CD4-positive, alpha-beta memory T cell (primary cell): ENCODE measurements at regions of chr3 and their contacts with region 1.

Region 1: DNA sequence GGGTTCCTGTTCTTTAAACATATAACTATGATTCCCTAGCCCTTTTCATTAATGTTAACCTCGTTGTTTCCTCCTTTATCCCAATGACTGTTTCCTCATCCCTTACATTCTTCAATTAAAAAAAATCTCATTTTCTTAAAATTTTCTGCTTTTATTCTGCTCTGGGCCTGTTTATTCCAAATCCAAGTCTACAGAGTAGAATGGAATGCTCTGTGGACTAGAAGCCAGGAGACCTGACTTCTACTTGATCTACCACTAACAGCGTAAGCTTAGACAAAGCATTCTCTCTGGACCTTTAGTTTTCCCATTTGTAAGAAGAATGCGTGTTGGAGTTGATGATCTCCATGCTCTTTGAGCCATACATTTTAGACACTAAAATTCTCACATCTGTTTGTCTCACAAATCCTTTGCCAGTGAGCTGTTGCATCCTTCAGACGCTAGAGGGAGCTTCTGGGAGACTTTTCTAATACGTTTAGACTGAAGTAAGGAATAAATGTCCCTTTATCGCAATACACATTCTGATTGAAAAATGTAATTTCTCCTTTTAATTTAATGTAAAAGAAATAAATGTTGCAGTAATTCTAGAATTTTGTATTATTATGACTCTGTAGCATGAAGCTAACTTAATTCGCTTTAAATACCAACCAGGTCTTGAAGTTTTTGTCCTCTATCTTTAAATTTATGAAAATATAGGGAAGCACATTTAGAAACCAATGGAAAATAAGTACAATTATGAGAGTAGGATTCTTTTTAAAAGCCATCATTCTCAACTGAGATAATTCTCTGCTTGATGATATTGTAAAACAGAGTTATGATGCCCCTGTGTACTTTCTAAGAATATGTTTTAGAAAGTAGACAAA is 21.7 kb upstream of the GMNC start:
- DNase-seq: peak in 3 of 5 donors; percentile 2 to 9 (median 6)
- H3K4me3 ChIP-seq: no peak overlapping the region
- H3K4me3 Mint-ChIP-seq: no peak overlapping the region
- H3K27ac ChIP-seq: no peak overlapping the region
- H3K27ac Mint-ChIP-seq: no peak overlapping the region
- H3K4me1 ChIP-seq: no peaks in the 10 kb centered on the region
- H3K4me1 Mint-ChIP-seq: no peaks in the 10 kb centered on the region
- H3K27me3 ChIP-seq: no peaks in the 10 kb centered on the region
- H3K27me3 Mint-ChIP-seq: no peaks in the 10 kb centered on the region

Region 2: DNA sequence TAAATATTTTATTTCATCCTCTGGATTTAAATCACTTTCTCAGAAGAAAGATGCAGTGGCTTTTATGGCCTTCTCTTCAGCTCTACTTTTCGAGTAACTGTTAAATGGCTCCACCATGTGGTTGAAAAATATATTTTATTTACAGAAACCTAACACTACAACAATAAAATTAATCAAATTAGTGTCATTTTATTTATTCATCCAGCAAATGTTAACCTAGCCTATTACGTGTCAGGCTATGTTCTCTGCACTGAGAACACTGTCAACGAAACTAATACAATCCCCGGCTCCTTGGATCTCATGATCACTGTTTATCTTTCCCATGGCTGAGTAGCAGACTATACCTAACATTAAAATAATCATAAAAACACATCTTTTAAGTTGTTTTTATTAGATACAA is 166.8 kb after region 1 on chr3:
- CTCF ChIA-PET with region 1: interaction called, 81 read pairs
- POLR2A ChIA-PET with region 1: no interaction called
- intact Hi-C with region 1: no loop called
- DNase-seq: no peak
- H3K4me3 ChIP-seq: no peak overlapping the region
- H3K4me3 Mint-ChIP-seq: no peak overlapping the region
- H3K27ac ChIP-seq: no peak overlapping the region
- H3K27ac Mint-ChIP-seq: no peak overlapping the region
- H3K4me1 ChIP-seq: no peaks in the 10 kb centered on the region
- H3K4me1 Mint-ChIP-seq: no peaks in the 10 kb centered on the region
- H3K27me3 ChIP-seq: no peaks in the 10 kb centered on the region
- H3K27me3 Mint-ChIP-seq: no peaks in the 10 kb centered on the region

Region 3: DNA sequence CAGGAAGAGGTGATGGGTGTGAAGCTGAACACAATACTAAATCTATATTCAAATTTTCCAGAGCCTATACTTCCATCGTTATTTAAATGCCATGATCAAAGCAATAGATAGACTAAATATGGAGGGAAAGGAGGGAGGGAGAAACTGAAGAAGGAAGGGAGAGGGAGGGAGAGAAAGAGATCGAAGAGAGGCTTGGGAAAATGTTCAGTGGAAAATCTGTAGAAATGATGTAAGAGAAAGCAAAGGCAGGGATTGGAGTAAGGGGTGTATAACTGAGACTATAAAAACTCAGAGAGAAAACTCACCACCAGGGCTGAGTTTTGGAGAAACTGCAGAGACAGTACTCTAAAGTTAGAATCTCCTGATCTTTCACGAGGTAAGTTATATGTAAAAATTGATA is 314.7 kb after region 1 on chr3 and contains the start of gene OSTN:
- CTCF ChIA-PET with region 1: no interaction called
- POLR2A ChIA-PET with region 1: no interaction called
- intact Hi-C with region 1: no loop called
- DNase-seq: no peak
- H3K4me3 ChIP-seq: no peak within 1 kb of the TSS
- H3K4me3 Mint-ChIP-seq: peak within 1 kb of the TSS in 1 of 8 donors; percentile 8
- H3K27ac ChIP-seq: no peak within 1 kb of the TSS
- H3K27ac Mint-ChIP-seq: no peak within 1 kb of the TSS
- H3K4me1 ChIP-seq: no peaks in the 10 kb centered on the region
- H3K4me1 Mint-ChIP-seq: no peaks in the 10 kb centered on the region
- H3K27me3 ChIP-seq: no peaks in the 10 kb centered on the region
- H3K27me3 Mint-ChIP-seq: peaks cover 0 to 2% of the 10 kb centered on the region in 2 donors
- total RNA-seq, gene OSTN: not detected